ENCODE measurements at regions of chr2 and their contacts with region 1.

Region 1: DNA sequence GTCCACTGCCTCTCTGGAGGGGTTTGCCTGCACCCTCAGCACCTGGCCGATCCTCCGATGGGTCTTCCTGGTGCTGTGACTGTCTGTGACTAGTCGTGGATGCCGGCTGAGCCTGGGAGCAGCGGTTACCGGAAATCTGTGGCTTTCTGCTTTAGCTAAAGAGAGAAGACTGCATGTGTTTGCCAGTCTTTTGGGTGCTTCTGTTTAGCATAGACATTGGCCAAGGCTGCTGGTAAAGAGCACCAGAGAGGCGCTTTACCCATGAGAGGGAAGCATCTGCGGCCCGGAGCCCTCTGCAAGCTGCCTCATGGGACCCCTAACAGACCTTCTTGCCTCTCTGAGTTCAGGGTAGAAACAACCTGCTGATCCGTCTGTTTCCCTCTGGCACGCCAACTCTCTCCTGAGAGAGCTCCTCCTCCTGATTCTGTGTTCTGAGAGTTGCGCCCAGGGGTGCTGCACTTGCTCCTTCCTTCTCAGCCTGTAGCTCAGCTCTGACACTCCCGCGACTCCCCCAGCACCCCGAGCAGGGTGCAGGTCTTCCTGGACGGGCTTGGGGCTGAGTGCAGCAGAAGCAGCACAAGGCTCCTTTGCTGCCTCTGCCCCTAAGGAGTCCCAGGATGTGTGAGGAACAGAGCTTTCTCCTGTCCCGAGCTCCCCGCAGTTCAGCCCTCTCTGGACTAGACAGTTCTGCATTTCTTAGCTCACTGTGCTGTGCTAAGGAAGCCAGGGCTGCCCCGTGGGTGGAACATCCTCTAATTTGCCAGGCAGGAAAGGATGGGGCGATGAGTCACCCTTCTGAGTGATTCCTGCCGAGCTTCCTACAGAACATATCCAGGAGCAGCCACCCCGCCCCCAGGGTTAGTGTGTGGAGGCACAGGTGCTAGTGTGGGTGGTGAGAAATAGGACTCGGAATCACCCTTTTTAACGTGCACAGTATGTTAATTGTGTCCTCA is 203.2 kb downstream of the SH3RF3 start:
- DNase-seq: peak; percentile 12
- H3K4me3 Mint-ChIP-seq: peak overlapping the region; percentile 76
- H3K27ac Mint-ChIP-seq: peak overlapping the region; percentile 6
- H3K4me1 Mint-ChIP-seq: peaks cover 29% of the 10 kb centered on the region
- H3K27me3 Mint-ChIP-seq: peaks cover 32% of the 10 kb centered on the region

Region 2: DNA sequence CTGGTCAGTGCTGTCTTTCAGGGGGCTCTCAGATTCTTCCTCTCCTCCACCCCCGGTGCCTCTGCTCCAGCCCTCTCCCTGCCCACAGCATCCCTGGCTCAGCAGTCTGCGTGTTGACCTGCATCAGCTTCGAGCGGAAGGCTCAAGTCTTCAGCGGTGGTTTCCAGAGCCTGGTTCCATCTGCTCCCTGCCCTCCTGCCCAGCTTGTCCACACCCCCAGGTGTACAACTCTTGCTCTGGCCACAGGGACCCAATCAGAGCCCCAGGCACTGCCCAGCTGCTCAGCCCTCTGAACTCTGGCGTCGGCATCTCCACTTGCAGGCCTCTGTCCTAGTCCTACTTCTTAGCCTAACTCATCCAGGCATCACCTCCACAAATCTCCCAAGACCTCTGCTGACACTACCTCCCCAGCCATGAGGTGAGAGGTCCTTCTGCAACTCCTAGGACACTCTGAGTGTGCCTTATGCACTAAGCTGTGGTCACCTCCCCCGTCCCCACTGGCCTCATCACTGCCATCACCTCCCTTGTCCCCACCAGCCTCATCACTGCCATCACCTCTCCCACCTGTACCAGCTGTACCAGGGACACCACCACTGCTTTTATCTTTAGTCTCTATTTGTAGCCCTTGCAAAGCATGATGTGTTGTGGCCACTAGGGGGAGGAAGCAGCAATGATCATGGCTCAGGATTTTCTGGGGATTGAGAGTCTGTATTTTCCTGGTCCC is 404.1 kb before region 1 on chr2:
- intact Hi-C with region 1: no loop called
- DNase-seq: no peak
- H3K4me3 Mint-ChIP-seq: no peak overlapping the region
- H3K27ac Mint-ChIP-seq: no peak overlapping the region
- H3K4me1 Mint-ChIP-seq: no peaks in the 10 kb centered on the region
- H3K27me3 Mint-ChIP-seq: no peaks in the 10 kb centered on the region

Region 3: DNA sequence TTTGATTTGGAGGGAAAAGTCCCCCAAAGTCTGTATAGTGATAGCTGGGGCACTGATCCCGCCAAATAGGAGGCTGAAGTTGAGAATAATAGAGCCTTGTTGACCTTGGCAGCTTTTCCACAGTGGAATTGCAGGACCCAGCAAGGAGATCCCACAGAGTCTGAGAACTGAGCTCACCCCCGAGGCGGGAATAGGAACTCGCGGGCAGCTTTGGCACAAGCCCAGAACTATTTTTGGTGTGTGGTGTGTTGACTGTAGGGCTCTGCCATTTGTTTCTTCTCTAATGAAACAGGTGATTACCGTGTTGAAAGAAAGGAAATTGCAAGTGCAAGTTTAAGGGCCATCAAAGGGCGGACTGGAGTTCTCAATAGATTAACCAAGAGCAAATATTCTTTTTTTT is 169.2 kb before region 1 on chr2:
- intact Hi-C with region 1: no loop called
- DNase-seq: no peak
- H3K4me3 Mint-ChIP-seq: no peak overlapping the region
- H3K27ac Mint-ChIP-seq: no peak overlapping the region
- H3K4me1 Mint-ChIP-seq: no peaks in the 10 kb centered on the region
- H3K27me3 Mint-ChIP-seq: peaks cover 26% of the 10 kb centered on the region

Region 4: DNA sequence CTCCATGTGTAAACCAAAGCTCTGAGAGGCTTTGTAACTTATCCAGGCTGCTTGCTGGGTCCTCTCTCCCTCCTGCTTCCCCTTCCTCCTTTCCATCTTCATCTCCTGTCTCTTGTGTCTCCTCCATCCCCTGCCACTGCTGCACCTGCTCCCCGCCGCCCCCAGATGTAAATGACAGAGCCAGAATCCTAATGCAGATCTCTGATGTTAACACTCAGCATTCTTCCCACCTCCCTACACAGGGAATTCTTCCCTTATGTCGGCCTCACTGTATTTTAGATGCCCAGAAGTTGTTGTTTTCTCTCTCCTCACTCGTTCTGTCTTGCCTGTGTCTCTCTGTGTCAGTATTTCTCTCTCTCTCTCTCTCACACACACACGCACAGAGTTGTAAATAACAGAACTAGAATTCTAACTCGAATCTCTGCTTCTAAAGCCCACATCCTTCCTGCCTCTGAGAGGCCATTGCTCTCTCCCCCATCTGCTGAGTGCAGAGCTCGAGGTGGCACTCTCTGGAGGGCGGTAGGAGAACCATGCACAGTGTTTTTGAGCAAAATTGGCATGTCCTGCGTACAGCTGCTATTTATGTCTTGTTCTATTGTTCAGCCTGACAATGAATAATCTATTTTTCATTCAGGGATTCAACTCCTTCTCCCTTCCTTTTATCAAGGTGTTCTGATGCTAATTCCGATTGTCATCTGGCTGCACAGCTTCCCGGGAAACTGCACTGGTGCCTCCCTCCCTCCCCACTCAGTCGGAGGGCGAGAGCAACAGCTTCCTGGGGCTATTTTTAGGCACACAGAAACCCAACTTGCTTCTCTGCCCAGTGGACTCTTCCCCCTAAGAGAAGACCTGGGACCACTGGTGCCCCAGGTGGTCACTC is 16.7 kb after region 1 on chr2:
- intact Hi-C with region 1: loop called (anchors 2 kb)
- DNase-seq: no peak
- H3K4me3 Mint-ChIP-seq: peak overlapping the region; percentile 21
- H3K27ac Mint-ChIP-seq: peak overlapping the region; percentile 6
- H3K4me1 Mint-ChIP-seq: peaks cover 15% of the 10 kb centered on the region
- H3K27me3 Mint-ChIP-seq: peaks cover 23% of the 10 kb centered on the region